ENCODE measurements at regions of chr17 and their contacts with region 1.

Region 1: DNA sequence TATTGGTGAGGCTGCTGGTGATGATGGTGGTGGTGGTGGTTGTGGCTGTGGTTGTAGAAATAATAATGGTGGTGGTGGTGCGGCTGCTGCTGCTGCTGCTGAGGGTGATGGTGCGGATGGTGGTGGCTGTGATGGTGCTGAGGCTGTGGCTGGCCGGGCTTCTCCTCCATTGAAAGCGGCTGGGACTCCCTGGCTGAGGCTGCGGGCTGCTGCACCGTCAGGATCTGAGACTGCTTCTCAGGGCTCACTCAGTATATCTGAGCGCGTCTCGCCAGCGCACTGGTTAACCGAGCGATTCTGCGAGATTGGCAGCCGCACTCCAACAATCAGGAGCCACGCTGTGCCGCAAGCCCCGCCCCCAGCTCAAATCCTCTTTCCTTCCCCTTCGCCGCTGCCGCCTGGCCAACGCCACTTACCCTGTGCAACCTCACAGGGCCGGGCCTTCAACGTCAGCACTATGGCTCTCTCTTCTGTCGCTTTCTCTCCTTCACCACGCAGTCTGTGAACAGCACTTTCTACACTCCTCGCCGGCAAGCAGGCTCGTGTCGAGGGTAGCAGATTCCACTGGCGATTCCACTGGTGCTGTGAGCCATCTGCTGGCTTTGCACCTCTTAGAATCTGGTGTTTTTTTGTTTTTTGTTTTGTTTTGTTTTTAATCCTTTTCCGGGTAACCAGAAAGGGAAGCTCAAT is at the start of gene NUFIP2:
- DNase-seq: peak; percentile 97
- H3K4me3 Mint-ChIP-seq: peak within 1 kb of the TSS; percentile 100
- H3K27ac Mint-ChIP-seq: peak within 1 kb of the TSS; percentile 99
- H3K4me1 Mint-ChIP-seq: peaks cover 43% of the 10 kb centered on the region
- H3K27me3 Mint-ChIP-seq: peaks cover 3% of the 10 kb centered on the region
- total RNA-seq, gene NUFIP2: 92.2 and 95.5 TPM in 2 replicates

Region 2: DNA sequence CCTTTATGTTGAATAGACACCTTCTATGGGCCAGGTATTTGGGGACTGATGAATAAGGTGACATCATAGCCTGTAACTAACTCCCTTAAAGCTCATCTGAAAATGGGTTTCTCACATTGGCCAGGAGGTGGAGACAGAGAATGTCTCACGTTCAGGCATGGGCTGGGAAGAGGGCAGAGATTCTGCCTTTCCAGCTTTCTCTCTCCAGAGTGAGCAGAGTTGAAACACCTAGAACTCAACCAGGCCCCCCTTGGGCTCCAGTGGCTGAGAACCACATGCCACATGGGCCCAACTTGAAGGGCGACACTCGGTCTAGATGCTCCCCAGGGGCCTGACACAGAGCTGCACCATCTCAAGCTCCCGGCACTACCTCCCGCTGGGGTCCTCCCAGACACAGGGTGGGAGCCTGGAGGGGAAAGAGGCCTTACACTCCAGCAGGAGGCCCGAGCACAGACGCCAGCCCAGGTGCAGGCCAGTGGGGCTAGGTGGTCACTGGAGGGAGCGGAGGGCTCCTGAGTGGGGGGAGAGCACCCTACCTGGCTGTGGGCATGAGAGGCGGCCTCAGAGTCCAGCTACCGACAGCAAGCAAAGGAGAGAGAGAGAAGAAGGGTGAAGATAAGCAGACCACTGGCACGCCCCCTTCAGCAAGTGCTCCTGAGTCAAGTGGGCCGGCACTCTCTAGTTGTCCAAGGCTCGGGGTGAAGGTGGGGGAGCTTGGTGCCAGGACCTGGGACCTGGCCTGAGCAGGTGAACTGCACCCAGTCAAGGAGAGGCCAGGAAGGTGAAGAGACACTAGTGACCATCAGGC is 169.7 kb before region 1 on chr17:
- intact Hi-C with region 1: loop called (anchors 1 kb)
- DNase-seq: peak; percentile 34
- H3K4me3 Mint-ChIP-seq: no peak overlapping the region
- H3K27ac Mint-ChIP-seq: no peak overlapping the region
- H3K4me1 Mint-ChIP-seq: no peaks in the 10 kb centered on the region
- H3K27me3 Mint-ChIP-seq: no peaks in the 10 kb centered on the region

Region 3: DNA sequence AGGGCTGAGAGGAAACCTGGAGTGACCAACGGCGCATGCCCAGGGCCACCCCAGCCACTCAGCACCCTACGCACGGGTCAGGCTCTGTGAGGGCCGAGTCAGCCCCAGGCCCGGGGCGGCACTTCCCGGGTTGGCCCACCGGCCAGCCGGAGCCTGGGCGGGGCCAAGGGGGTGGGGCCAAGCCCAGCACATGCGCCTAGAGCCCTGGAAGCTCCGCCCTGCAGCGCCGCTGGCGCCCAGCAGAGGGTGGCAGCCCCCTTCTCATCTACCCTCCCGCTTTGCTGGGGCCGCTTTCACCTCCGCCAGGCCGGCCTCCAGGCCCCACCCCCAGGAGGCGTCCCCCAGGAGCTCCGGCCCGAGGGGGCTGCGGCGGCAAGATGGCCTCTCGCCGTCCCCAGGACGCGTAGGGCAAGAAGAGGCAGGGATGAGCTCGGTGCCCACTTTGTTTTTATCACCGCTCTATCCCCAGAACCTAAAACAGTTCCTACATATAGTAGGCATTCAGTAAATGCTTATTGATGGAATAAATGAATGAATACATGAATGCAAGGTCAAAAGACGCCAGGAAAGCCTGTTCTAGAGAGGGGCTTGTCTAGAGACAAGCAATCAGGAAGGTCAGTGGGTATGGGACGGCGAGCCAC is 145.1 kb before region 1 on chr17:
- intact Hi-C with region 1: loop called (anchors 1 kb)
- DNase-seq: peak; percentile 91
- H3K4me3 Mint-ChIP-seq: peak overlapping the region; percentile 79
- H3K27ac Mint-ChIP-seq: peak overlapping the region; percentile 64
- H3K4me1 Mint-ChIP-seq: peaks cover 63% of the 10 kb centered on the region
- H3K27me3 Mint-ChIP-seq: no peaks in the 10 kb centered on the region

Region 4: GRCh38 chr17:29256735-29257466 is 37.1 kb before region 1 on chr17:
- intact Hi-C with region 1: loop called (anchors 2 kb)
- DNase-seq: no peak
- H3K4me3 Mint-ChIP-seq: no peak overlapping the region
- H3K27ac Mint-ChIP-seq: peak overlapping the region; percentile 1
- H3K4me1 Mint-ChIP-seq: peaks cover 15% of the 10 kb centered on the region
- H3K27me3 Mint-ChIP-seq: no peaks in the 10 kb centered on the region

Region 5: DNA sequence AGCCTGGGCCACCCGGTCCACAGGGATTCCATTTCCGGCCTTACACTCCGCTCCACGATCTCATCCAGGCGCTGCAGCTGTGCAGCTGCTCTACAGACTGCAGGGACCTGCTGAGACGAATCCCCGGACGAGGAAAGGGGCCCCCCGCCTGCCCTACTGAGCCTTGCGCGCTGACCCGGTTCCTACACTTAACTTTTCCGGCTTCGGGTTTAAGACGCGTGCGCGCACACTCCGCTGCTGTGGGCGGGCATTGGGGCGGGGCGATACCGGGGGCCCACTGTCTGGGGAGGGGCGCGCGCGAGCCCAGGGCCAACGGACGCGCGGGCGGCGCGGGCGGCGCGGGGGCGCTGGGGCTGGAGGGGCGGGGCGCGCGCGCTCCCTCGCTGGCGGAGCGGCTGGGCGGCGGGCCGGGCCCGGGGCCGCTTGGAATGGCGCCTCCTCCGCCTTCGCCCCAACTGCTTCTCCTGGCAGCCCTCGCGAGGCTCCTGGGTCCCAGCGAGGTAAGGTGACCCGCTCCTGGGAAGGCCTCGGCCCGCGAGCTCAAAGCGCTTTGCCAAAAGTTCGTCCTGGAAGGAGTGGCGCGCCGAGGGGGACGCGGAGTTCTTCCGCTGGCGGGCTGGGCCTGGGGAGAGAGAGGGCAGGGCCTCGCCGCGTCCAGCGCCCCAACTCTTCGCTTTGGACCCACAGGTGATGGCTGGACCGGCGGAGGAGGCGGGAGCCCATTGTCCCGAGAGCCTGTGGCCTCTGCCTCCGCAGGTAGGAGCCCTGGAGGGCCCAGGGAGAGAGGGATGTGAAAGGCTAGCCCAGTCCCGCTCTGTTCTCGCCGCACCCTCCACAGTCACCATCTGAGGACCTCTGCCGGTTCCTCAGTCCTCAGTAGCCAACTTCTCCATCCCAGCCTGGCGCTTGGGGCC is 274.6 kb after region 1 on chr17 and contains the start of gene TP53I13:
- intact Hi-C with region 1: loop called (anchors 2 kb)
- DNase-seq: peak; percentile 87
- H3K4me3 Mint-ChIP-seq: peak within 1 kb of the TSS; percentile 89
- H3K27ac Mint-ChIP-seq: peak within 1 kb of the TSS; percentile 95
- H3K4me1 Mint-ChIP-seq: peaks cover 20% of the 10 kb centered on the region
- H3K27me3 Mint-ChIP-seq: peaks cover 1% of the 10 kb centered on the region
- total RNA-seq, gene TP53I13: 67.4 and 71.8 TPM in 2 replicates

Measured in activated T-helper 1 cell treated with anti-CD3 and anti-CD28 coated beads, Interleukin-12 subunit alpha, Interleukin-12 subunit beta, Interleukin-2, Interleukin-4 antibody, amounts not matched to agents 30 ng/mL and 10 ng/mL and 1 ng/mL, durations not matched to agents 14 hours and 24 hours and 36 hours (primary cell).